H1 (cell line): ENCODE measurements at regions of chr3 and their contacts with region 1.

Region 1: DNA sequence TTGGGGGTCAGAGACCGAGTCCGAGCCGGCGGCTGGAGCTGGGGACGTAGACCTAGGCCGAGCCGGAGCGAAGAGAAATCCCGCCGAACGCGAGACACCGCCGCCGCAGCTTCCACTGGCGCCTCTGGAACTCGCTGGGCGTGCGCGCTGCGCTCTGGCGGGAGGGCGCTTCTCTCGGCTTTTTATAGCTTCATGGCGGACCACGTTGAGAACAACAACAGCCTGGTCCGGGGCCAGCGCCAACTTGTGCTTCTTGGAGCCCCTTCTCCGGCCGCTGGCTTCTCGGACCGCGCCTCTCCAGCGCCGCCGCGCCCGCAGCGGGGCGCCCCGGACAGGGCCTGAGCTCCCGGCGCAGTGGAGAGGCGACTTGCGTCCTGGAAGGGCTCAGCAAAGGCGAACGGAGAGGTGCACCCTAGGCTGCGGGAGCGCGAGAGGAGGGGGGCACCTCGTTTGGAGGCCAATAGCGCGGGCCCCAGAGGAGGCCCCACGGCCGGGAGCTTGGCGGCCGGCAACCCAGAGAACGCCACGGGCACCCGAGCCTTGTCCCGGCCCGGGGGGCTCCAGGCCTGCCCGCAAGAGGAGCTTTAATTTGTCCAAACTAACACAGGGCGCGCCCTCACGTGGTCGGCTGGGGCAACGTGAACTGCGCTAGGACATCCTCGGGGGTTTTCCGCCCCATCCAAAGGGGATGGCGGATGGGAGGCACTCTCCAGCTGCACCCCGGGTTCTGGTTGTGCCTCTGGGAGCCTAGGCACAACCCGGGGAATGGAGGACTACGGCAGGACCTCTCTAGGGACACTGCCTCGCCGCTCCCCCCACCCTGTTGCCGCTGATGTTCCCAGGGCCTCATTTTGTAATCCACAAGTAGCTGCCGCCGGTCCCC is 37.7 kb downstream of the HMCES start:
- DNase-seq: peak in 1 of 2 experiments; percentile 96
- H3K4me3 ChIP-seq: peak overlapping the region; percentile 70 to 96 (median 78)
- H3K27ac ChIP-seq: peak overlapping the region; percentile 69
- H3K4me1 ChIP-seq: peaks cover 4 to 9% (median 5%) of the 10 kb centered on the region in 4 experiments
- H3K27me3 ChIP-seq: no peaks in the 10 kb centered on the region
- CTCF ChIP-seq: peak in 2 of 3 experiments; percentile 43 to 58; a peak in 3 of 4 replicates
- EP300 ChIP-seq: peak in 1 of 2 experiments; percentile 74; a peak in 1 of 3 replicates
- POLR2A ChIP-seq: peak in 1 of 2 experiments; percentile 99; a peak in 2 of 3 replicates
- RAD21 ChIP-seq: peak; percentile 41 to 51

Region 2: GRCh38 chr3:129183569-129184395 is 132.6 kb before region 1 on chr3 and contains the start of gene CNBP:
- CTCF ChIA-PET with region 1: no interaction called
- POLR2A ChIA-PET with region 1: interaction called, 15 read pairs
- DNase-seq: peak in 1 of 2 experiments; percentile 91
- H3K4me3 ChIP-seq: peak within 1 kb of the TSS; percentile 77 to 100 (median 98)
- H3K27ac ChIP-seq: peak within 1 kb of the TSS; percentile 99
- H3K4me1 ChIP-seq: peaks cover 0 to 4% (median 0%) of the 10 kb centered on the region in 4 experiments; a peak in 1 of 7 replicates
- H3K27me3 ChIP-seq: no peaks in the 10 kb centered on the region
- CTCF ChIP-seq: no peak; a peak in 1 of 4 replicates
- EP300 ChIP-seq: no peak
- POLR2A ChIP-seq: peak in 1 of 2 experiments; percentile 91; a peak in 2 of 3 replicates
- RAD21 ChIP-seq: no peak
- total RNA-seq, gene CNBP: 351 and 371 TPM in 2 replicates

Region 3: DNA sequence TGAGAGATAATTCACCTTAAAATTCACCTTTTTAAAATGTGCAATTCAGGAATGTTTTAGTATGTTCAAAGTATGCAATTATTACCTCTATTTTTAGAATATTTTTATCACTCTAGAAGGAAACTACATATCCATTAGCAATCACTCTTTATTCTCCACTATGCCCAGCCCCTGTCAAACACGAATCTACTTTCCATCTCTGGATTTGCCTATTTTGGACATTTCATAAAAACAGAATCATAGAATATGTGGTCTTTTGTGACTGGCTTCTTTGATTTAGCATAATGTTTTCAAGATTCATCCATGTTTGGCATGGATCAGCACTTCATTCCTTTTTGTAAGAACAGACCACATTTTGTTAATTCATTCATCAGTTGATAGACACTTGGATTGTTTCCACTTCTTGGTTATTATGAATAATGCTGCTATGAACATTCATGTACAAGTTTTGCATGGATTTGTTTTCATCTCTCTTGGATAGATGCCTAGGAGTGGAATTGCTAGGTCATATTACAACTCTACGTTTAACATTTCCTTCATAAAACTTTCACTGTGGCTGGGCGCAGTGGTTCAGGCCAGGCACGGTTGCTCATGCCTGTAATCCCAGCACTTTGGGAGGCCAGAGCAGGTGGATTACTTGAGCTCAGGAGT is 25.0 kb before region 1 on chr3:
- CTCF ChIA-PET with region 1: interaction called, 3 read pairs
- POLR2A ChIA-PET with region 1: interaction called, 48 read pairs
- DNase-seq: no peak
- H3K4me3 ChIP-seq: no peak overlapping the region
- H3K27ac ChIP-seq: no peak overlapping the region
- H3K4me1 ChIP-seq: no peaks in the 10 kb centered on the region
- H3K27me3 ChIP-seq: no peaks in the 10 kb centered on the region
- CTCF ChIP-seq: no peak
- EP300 ChIP-seq: no peak
- POLR2A ChIP-seq: no peak
- RAD21 ChIP-seq: no peak

Region 4: GRCh38 chr3:129330409-129330808 is 14.0 kb after region 1 on chr3:
- CTCF ChIA-PET with region 1: interaction called, 73 read pairs
- POLR2A ChIA-PET with region 1: interaction called, 112 read pairs
- DNase-seq: no peak
- H3K4me3 ChIP-seq: no peak overlapping the region
- H3K27ac ChIP-seq: no peak overlapping the region
- H3K4me1 ChIP-seq: no peaks in the 10 kb centered on the region
- H3K27me3 ChIP-seq: peaks cover 0 to 3% (median 0%) of the 10 kb centered on the region in 4 experiments; a peak in 1 of 7 replicates
- CTCF ChIP-seq: no peak
- EP300 ChIP-seq: no peak
- POLR2A ChIP-seq: no peak
- RAD21 ChIP-seq: no peak

Region 5: DNA sequence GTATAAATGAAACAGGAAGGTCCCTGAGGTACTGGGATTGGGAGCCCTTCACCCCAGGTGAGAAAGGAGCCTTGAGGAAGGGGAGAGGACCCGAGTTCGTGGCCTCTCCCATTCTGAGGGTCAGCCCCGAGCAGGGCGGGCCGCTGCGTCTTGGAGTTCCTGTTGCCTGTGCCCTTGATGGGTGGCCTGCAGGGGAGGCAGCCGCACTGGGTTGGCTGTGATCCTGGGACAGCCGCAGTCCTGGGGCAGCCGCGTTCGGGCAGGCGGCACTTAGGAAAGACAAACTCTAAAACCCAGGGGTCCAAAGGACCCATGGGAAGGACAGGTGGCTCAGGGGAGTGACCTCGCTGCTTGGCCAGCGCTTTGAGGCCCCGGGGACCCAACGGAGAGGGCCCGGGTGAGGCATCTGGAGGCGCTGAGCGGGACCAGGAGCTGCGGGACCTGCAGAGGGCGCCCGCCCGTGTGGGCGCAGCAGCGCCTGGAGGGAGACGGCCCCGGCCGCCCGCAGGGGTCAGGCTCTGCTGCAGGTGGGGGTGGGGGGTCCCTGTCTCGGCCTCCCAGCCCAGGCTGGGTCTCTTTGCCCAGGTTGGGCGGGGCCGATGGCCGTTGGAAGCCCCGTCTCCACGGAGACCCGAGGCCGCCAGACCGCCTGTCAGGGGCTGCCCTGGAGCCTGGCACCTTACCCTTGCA is 27.4 kb after region 1 on chr3:
- CTCF ChIA-PET with region 1: interaction called, 5 read pairs
- POLR2A ChIA-PET with region 1: interaction called, 26 read pairs
- DNase-seq: peak in 1 of 2 experiments; percentile 85
- H3K4me3 ChIP-seq: peak overlapping the region; percentile 25 to 57 (median 36)
- H3K27ac ChIP-seq: no peak overlapping the region
- H3K4me1 ChIP-seq: peaks cover 0 to 12% (median 8%) of the 10 kb centered on the region in 4 experiments; a peak in 6 of 7 replicates
- H3K27me3 ChIP-seq: no peaks in the 10 kb centered on the region
- CTCF ChIP-seq: peak; percentile 66 to 88 (median 75)
- EP300 ChIP-seq: no peak
- POLR2A ChIP-seq: no peak
- RAD21 ChIP-seq: peak; percentile 28 to 60; a peak in 3 of 4 replicates

Region 6: DNA sequence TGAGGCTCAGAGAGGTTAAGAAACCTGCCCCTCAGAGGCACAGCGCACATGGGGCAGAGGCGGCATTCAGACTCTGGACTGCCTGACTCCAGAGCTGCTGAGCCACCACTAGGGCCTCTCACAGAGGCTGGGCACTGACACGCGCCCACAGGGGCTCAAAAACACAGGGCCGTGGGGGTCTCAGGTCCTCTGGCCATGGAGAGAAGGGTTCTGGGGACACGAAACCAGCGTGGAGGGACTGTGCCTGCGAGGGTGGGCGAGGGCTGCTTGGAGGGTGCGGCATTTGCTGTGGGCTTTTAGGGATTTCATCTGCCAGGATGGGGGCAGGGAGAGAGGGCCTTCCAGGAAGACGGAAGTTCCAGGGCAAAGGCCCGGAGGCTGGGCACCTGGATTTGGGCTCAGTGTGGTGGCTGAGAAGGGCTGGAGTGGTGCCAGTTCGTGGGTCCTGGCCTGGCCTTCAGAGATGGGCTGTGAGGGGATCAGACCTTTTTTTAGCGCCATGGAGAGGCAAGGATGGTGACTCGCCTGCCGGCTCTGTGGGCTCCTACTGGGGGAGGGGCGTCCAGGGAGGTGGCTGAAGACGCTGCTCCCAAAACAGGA is 42.5 kb after region 1 on chr3:
- CTCF ChIA-PET with region 1: interaction called, 4 read pairs
- POLR2A ChIA-PET with region 1: interaction called, 22 read pairs
- DNase-seq: no peak
- H3K4me3 ChIP-seq: no peak overlapping the region
- H3K27ac ChIP-seq: no peak overlapping the region
- H3K4me1 ChIP-seq: peaks cover 0 to 5% (median 2%) of the 10 kb centered on the region in 4 experiments; a peak in 1 of 7 replicates
- H3K27me3 ChIP-seq: no peaks in the 10 kb centered on the region
- CTCF ChIP-seq: no peak
- EP300 ChIP-seq: no peak
- POLR2A ChIP-seq: no peak
- RAD21 ChIP-seq: no peak

Region 7: GRCh38 chr3:129439817-129440617 is 123.6 kb after region 1 on chr3 and contains the starts of genes IFT122 and MBD4:
- CTCF ChIA-PET with region 1: no interaction called
- POLR2A ChIA-PET with region 1: interaction called, 11 read pairs
- DNase-seq: peak; percentile 95 to 98
- H3K4me3 ChIP-seq: peak within 1 kb of the TSS; percentile 76 to 95 (median 86)
- H3K27ac ChIP-seq: peak within 1 kb of the TSS; percentile 68
- H3K4me1 ChIP-seq: peaks cover 0 to 8% (median 4%) of the 10 kb centered on the region in 4 experiments; a peak in 5 of 7 replicates
- H3K27me3 ChIP-seq: no peaks in the 10 kb centered on the region
- CTCF ChIP-seq: no peak
- EP300 ChIP-seq: no peak
- POLR2A ChIP-seq: peak; percentile 64 to 83; a peak in 2 of 3 replicates
- RAD21 ChIP-seq: no peak
- total RNA-seq, gene IFT122: 23.7 and 26.2 TPM in 2 replicates
- total RNA-seq, gene MBD4: 33.4 and 35.8 TPM in 2 replicates